A549 (cell line): ENCODE measurements at regions of chr7 and their contacts with region 1.

Region 1: GRCh38 chr7:36487756-36488336 is 98.2 kb downstream of the ANLN start:
- DNase-seq: peak; percentile 47 to 71
- ATAC-seq: peak; percentile 59 to 75; a peak in 4 of 6 replicates
- H3K4me3 ChIP-seq: no peak overlapping the region
- H3K27ac ChIP-seq: no peak overlapping the region
- H3K4me1 ChIP-seq: no peaks in the 10 kb centered on the region
- CTCF ChIP-seq: peak; percentile 93
- EP300 ChIP-seq: no peak
- POLR2A ChIP-seq: no peak
- RAD21 ChIP-seq: peak; percentile 95 to 97

Region 2: GRCh38 chr7:36615852-36616540 is 128.2 kb after region 1 on chr7:
- CTCF ChIA-PET with region 1: interaction called, 10 read pairs
- POLR2A ChIA-PET with region 1: no interaction called
- DNase-seq: no peak
- ATAC-seq: no peak
- H3K4me3 ChIP-seq: no peak overlapping the region
- H3K27ac ChIP-seq: no peak overlapping the region
- H3K4me1 ChIP-seq: no peaks in the 10 kb centered on the region
- CTCF ChIP-seq: no peak
- EP300 ChIP-seq: no peak
- POLR2A ChIP-seq: no peak
- RAD21 ChIP-seq: no peak

Region 3: GRCh38 chr7:36653671-36654355 is 166.0 kb after region 1 on chr7:
- CTCF ChIA-PET with region 1: interaction called, 11 read pairs
- POLR2A ChIA-PET with region 1: no interaction called
- DNase-seq: no peak
- ATAC-seq: no peak
- H3K4me3 ChIP-seq: no peak overlapping the region
- H3K27ac ChIP-seq: peak overlapping the region in 1 of 2 experiments; percentile 66; a peak in 3 of 6 replicates
- H3K4me1 ChIP-seq: peaks cover 49% of the 10 kb centered on the region
- CTCF ChIP-seq: no peak
- EP300 ChIP-seq: no peak
- POLR2A ChIP-seq: no peak
- RAD21 ChIP-seq: no peak

Region 4: GRCh38 chr7:36746347-36746746 is 258.5 kb after region 1 on chr7:
- CTCF ChIA-PET with region 1: no interaction called
- POLR2A ChIA-PET with region 1: no interaction called
- DNase-seq: peak in 1 of 2 experiments; percentile 10
- ATAC-seq: peak; percentile 37 to 39; a peak in 3 of 6 replicates
- H3K4me3 ChIP-seq: no peak overlapping the region
- H3K27ac ChIP-seq: peak overlapping the region; percentile 21 to 70; a peak in 4 of 6 replicates
- H3K4me1 ChIP-seq: peaks cover 22% of the 10 kb centered on the region; the same call in 2 of the 3 replicates
- CTCF ChIP-seq: no peak
- EP300 ChIP-seq: no peak
- POLR2A ChIP-seq: no peak
- RAD21 ChIP-seq: no peak

Region 5: GRCh38 chr7:36967387-36967786 is 479.5 kb after region 1 on chr7:
- CTCF ChIA-PET with region 1: interaction called, 15 read pairs
- POLR2A ChIA-PET with region 1: no interaction called
- DNase-seq: peak; percentile 49 to 69
- ATAC-seq: peak; percentile 94 to 100
- H3K4me3 ChIP-seq: no peak overlapping the region
- H3K27ac ChIP-seq: no peak overlapping the region
- H3K4me1 ChIP-seq: peaks cover 10% of the 10 kb centered on the region
- CTCF ChIP-seq: peak; percentile 72
- EP300 ChIP-seq: no peak
- POLR2A ChIP-seq: no peak
- RAD21 ChIP-seq: peak; percentile 72 to 88

Region 6: GRCh38 chr7:37193087-37193774 is 705.4 kb after region 1 on chr7:
- CTCF ChIA-PET with region 1: interaction called, 61 read pairs
- POLR2A ChIA-PET with region 1: no interaction called
- DNase-seq: no peak
- ATAC-seq: no peak
- H3K4me3 ChIP-seq: no peak overlapping the region
- H3K27ac ChIP-seq: no peak overlapping the region
- H3K4me1 ChIP-seq: no peaks in the 10 kb centered on the region
- CTCF ChIP-seq: no peak
- EP300 ChIP-seq: no peak
- POLR2A ChIP-seq: no peak
- RAD21 ChIP-seq: no peak